CD8-positive, alpha-beta T cell (primary cell): ENCODE measurements at regions of chr2 and their contacts with region 1.

Region 1: GRCh38 chr2:218908721-218909619 is 28.3 kb downstream of the WNT10A start:
- DNase-seq: peak; percentile 77 to 94 (median 88)
- ATAC-seq: peak; percentile 99
- H3K4me3 ChIP-seq: peak overlapping the region; percentile 56
- H3K4me3 Mint-ChIP-seq: peak overlapping the region; percentile 81
- H3K27ac ChIP-seq: peak overlapping the region; percentile 32
- H3K27ac Mint-ChIP-seq: peak overlapping the region; percentile 62
- H3K4me1 ChIP-seq: peaks cover 8% of the 10 kb centered on the region
- H3K4me1 Mint-ChIP-seq: peaks cover 14% of the 10 kb centered on the region
- H3K27me3 ChIP-seq: no peaks in the 10 kb centered on the region
- H3K27me3 Mint-ChIP-seq: peaks cover 15% of the 10 kb centered on the region
- CTCF ChIP-seq: no peak

Region 2: DNA sequence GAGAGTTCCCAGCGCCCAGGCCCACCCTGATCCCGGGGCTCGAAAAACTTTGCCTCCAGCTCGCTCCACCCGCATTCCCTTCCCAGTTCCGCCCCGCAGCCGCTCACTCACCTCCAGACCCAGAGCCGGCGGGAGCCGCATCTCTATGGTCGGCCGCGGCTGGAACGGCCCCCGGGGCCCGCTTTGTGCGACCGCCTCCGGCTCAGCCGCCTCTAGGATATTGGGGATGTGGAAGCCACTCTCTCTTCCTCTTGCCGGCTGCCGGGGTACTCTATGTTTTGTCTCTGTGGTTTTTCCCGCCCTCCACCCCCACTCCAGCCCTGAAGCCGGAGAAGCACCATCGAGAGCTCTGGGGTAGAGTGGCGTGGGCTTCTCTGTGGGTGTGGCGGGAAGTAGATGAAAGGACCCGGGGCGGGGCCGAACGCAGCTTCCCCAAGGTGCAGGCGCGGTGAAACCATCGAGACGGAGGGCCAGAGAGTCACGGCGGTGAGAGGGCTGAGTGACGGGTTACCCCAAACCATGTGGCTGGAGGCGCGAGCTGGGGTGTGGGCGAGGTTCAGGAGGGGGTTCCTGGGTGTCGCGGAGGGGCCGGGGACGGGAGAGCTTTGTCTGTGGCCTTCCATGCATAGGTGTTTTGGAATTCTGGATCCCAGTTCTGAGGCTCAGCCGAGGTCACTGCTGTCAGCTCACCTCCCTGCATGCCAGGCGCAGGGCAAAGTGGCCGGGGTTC is 249.5 kb before region 1 on chr2 and contains the starts of genes BCS1L and ZNF142:
- CTCF ChIA-PET with region 1: no interaction called
- POLR2A ChIA-PET with region 1: no interaction called
- intact Hi-C with region 1: loop called in 1 of 2 experiments (anchors 5 kb)
- DNase-seq: peak; percentile 78 to 97 (median 92)
- ATAC-seq: peak; percentile 98
- H3K4me3 ChIP-seq: peak within 1 kb of the TSS; percentile 95 to 98
- H3K4me3 Mint-ChIP-seq: peak within 1 kb of the TSS; percentile 97
- H3K27ac ChIP-seq: peak within 1 kb of the TSS; percentile 66 to 80
- H3K27ac Mint-ChIP-seq: peak within 1 kb of the TSS; percentile 95
- H3K4me1 ChIP-seq: peaks cover 17% of the 10 kb centered on the region
- H3K4me1 Mint-ChIP-seq: peaks cover 34% of the 10 kb centered on the region
- H3K27me3 ChIP-seq: no peaks in the 10 kb centered on the region
- H3K27me3 Mint-ChIP-seq: no peaks in the 10 kb centered on the region
- CTCF ChIP-seq: no peak
- total RNA-seq, gene BCS1L: 13.1 to 17.4 TPM
- total RNA-seq, gene ZNF142: 41.6 to 42.6 TPM

Region 3: DNA sequence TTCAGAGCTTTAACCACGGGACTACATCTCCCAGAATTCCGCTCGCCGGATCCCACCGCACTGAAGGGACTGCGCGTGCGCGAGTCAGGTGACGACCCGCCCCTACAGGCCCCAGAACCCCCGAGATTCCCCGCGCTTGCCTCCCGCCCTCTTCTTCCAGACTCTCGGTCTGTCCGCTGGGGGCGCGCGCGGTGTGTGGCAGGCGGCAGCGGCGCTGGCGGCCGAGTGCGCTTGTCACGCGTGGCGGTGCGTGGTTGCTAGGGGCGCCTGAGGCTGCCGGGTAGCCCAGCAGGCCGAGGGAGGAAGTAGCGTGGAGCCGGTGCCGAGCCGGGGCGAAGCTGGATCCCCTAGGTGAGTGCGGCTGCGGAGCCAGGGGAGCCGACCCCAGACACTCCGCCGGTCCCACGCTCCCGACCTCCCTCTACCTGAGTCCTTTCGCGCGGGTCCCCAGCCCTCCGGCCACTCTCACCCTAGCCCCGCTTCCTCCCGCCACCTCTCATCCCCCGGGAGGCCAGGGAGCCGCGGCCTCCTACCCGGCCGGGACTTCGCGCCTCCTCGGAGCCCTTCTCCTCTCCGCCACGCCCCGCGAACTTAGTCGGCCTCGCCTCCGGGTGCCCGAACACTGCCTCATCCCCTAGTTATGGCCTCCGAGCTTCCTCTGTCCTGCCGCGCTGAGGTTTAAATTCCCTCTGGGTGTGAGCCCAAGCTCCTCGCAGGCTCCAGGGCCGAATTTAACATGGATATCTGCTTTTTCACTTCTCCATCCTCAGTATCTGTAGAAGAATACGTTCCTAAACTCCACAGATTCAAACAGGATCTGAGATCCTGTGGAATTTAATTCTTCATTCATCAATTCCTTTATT is 198.1 kb before region 1 on chr2 and contains the start of gene TTLL4:
- CTCF ChIA-PET with region 1: no interaction called
- POLR2A ChIA-PET with region 1: no interaction called
- intact Hi-C with region 1: loop called (anchors 1 to 5 kb)
- DNase-seq: peak; percentile 97 to 99 (median 99)
- ATAC-seq: peak; percentile 99
- H3K4me3 ChIP-seq: peak within 1 kb of the TSS; percentile 86 to 92
- H3K4me3 Mint-ChIP-seq: peak within 1 kb of the TSS; percentile 91
- H3K27ac ChIP-seq: peak within 1 kb of the TSS; percentile 73 to 90
- H3K27ac Mint-ChIP-seq: peak within 1 kb of the TSS; percentile 84
- H3K4me1 ChIP-seq: peaks cover 13% of the 10 kb centered on the region
- H3K4me1 Mint-ChIP-seq: peaks cover 19% of the 10 kb centered on the region
- H3K27me3 ChIP-seq: no peaks in the 10 kb centered on the region
- H3K27me3 Mint-ChIP-seq: peaks cover 6% of the 10 kb centered on the region
- CTCF ChIP-seq: peak; percentile 76
- total RNA-seq, gene TTLL4: 6.9 to 8.1 TPM

Region 4: GRCh38 chr2:218806346-218806978 is 102.5 kb before region 1 on chr2:
- CTCF ChIA-PET with region 1: no interaction called
- POLR2A ChIA-PET with region 1: no interaction called
- intact Hi-C with region 1: no loop called
- DNase-seq: no peak
- ATAC-seq: no peak
- H3K4me3 ChIP-seq: no peak overlapping the region
- H3K4me3 Mint-ChIP-seq: no peak overlapping the region
- H3K27ac ChIP-seq: no peak overlapping the region
- H3K27ac Mint-ChIP-seq: no peak overlapping the region
- H3K4me1 ChIP-seq: no peaks in the 10 kb centered on the region
- H3K4me1 Mint-ChIP-seq: peaks cover 5% of the 10 kb centered on the region
- H3K27me3 ChIP-seq: peaks cover 0 to 6% of the 10 kb centered on the region in 2 experiments
- H3K27me3 Mint-ChIP-seq: peaks cover 45% of the 10 kb centered on the region
- CTCF ChIP-seq: no peak

Region 5: DNA sequence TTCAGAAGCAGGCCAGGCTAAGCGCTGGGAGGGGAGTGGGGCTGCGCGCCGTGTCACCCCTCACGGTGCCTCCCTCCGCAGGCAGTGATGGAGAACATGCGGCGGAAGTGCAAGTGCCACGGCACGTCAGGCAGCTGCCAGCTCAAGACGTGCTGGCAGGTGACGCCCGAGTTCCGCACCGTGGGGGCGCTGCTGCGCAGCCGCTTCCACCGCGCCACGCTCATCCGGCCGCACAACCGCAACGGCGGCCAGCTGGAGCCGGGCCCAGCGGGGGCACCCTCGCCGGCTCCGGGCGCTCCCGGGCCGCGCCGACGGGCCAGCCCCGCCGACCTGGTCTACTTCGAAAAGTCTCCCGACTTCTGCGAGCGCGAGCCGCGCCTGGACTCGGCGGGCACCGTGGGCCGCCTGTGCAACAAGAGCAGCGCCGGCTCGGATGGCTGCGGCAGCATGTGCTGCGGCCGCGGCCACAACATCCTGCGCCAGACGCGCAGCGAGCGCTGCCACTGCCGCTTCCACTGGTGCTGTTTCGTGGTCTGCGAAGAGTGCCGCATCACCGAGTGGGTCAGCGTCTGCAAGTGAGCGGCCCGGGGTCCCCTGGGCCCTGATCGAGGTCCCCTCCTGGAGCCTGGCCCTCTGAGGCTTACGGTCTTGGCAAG is 16.1 kb before region 1 on chr2:
- CTCF ChIA-PET with region 1: interaction called, 1,148 read pairs
- POLR2A ChIA-PET with region 1: interaction called, 3 read pairs
- intact Hi-C with region 1: loop called in 1 of 2 experiments (anchors 2 kb)
- DNase-seq: peak; percentile 71 to 97 (median 85)
- ATAC-seq: peak; percentile 65
- H3K4me3 ChIP-seq: peak overlapping the region; percentile 36 to 51
- H3K4me3 Mint-ChIP-seq: peak overlapping the region; percentile 72
- H3K27ac ChIP-seq: peak overlapping the region; percentile 68 to 84
- H3K27ac Mint-ChIP-seq: peak overlapping the region; percentile 95
- H3K4me1 ChIP-seq: peaks cover 61% of the 10 kb centered on the region
- H3K4me1 Mint-ChIP-seq: peaks cover 44% of the 10 kb centered on the region
- H3K27me3 ChIP-seq: peaks cover 0 to 7% of the 10 kb centered on the region in 2 experiments
- H3K27me3 Mint-ChIP-seq: no peaks in the 10 kb centered on the region
- CTCF ChIP-seq: peak; percentile 67

Region 6: DNA sequence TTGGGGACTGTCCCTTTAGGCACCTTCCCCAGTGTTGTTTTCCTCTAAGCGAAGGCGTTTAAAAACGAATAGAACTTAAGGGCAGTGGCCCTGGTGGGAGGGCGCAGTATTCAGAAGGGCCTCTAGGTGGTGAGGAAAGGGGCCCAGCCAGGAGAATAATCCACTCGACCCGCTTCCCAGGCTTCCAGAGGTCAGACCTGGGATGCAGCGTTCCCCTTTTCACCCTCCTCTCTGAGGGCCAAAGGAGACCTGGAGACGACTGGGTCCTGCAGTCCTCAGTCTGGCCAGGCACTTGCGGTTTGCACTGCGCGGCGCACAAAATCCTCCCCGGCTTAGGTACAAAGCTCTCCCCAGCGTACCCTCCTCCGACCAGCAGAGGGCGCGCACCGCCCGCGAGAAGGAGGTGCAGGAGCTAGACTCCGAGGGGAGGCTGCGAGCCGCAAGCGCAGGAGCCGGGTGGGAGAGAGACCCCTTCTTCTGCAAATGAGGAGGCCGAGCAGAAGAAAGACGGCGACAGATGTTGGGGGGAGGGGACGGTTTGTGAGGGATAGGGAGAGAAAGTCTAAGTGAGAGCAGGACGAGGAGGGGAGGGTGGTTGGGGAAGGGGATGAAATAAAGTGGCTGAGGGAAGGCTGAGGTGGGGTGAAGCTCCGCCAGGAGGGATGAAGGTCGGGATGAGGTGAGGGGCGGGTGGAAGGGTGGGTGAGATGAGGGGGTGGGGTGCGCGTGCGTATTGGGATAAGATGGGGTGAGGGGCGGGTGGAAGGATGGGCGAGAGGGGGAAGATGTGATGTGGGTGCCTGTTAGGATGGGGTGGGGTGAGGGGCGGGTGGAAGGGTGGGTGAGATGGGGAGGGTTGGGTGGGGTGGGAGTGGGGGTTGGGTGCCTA is 71.1 kb after region 1 on chr2:
- CTCF ChIA-PET with region 1: interaction called, 3 read pairs
- POLR2A ChIA-PET with region 1: no interaction called
- intact Hi-C with region 1: loop called in 1 of 2 experiments (anchors 5 kb)
- DNase-seq: peak; percentile 72 to 88 (median 83)
- ATAC-seq: peak; percentile 89
- H3K4me3 ChIP-seq: peak overlapping the region; percentile 3 to 18
- H3K4me3 Mint-ChIP-seq: peak overlapping the region; percentile 76
- H3K27ac ChIP-seq: no peak overlapping the region
- H3K27ac Mint-ChIP-seq: no peak overlapping the region
- H3K4me1 ChIP-seq: peaks cover 31% of the 10 kb centered on the region
- H3K4me1 Mint-ChIP-seq: peaks cover 34% of the 10 kb centered on the region
- H3K27me3 ChIP-seq: peaks cover 49% of the 10 kb centered on the region in 2 experiments
- H3K27me3 Mint-ChIP-seq: peaks cover 64% of the 10 kb centered on the region
- CTCF ChIP-seq: peak; percentile 94